ENCODE measurements at regions of chr11 and their contacts with region 1.

Region 1: DNA sequence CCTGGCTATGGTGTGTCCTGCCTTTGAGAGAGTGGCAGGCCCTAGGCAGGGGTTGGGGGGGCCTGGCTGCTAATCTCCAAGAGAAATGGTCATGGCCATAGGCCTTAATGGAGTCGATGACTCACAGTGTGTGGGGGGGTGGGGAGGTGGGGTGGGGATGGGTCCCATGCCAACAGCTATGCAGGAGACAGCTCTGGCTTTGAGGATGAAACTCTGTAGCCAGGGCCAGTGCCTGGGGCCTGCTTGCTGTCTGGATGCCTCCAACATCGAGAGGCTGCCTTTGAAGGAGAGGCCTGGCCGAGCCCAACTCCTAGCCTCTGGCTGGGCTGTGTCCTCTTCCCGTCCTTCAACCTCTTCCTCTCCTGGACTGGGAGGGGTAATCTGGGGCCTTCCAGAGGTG is 23.9 kb upstream of the TSPAN18 start:
- DNase-seq: no peak
- ATAC-seq: peak; percentile 28 to 43

Region 2: DNA sequence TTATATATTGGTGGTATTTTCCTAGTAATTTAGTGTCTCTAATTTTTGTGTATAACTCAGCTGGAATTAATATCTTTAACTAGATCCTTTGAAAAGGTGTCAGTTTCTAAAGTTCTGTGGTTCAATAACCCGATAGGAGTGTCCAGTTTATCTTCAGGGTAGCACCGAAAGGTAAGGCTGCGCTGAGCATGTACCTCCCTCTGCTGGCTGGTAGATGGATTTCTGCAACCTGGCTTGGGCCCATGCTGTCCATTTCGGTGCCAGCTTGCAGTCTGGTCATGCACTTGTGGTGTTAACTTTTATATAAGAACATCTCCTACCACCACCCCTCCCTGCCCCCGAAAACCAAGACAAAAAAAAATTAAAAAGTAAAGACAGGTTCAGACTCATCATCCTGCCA is 582.7 kb before region 1 on chr11:
- intact Hi-C with region 1: no loop called
- DNase-seq: no peak
- ATAC-seq: peak; percentile 71 to 75

Region 3: DNA sequence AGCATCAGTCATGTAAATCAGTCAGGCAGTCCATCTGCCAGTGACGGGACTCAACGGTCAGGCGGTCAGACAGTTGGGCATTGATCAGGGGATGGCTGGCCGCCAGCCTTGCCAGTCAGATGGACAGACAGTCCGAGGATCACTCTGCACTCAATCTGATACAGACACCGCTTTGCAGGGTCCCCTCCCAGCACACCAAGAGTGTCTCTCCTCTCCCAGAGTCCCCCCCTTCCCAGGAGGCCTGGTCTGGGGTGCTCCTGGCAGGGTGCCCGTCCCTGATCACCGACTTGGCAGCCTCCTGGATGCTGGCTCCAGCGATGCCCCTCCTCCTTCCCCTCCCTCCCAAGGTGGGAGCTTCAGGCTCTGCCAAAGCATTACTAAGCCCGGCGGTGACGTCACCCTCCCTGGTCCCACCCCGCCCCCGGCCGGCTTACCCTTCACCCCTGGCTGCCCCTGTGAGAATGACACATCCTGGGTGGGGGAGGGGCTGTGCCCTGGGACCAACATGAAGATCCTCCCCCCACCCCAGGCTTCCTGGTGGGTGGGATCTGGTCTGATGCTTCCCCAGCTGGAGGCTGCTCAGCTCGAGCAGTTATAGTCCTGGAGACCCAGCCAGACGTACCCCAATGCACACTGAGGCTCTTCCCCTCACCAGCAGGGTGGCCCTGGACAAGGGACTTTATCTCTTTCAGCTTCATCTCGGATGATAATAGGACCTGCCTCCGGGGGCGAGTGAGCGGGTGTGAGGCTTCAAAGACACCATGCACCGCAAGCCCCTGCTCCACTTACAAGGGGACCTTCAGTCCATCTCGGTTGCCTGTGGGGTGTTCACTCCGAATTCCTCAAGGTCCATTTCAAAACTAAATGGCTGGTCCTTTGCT is 68.2 kb before region 1 on chr11:
- intact Hi-C with region 1: loop called in 1 of 2 experiments (anchors 2 kb)
- DNase-seq: peak; percentile 92
- ATAC-seq: peak; percentile 82 to 96

Region 4: DNA sequence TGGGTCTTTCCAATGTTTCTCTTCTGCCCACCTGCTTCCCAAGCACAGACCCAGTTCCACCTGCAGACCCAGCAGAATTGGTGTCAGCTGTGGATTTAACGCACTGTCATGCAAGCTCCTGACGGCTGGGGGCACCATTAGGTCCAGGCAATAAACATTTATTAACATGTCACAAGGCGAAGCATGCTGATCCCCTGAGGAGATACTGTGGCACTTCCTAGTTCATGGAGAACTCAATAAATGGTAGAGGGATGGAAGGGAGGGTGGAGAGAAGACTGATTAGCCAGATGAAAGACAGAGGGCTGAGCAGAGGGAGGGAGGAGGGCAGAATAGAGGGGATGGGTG is 44.4 kb before region 1 on chr11:
- intact Hi-C with region 1: loop called in 1 of 2 experiments (anchors 5 kb)
- DNase-seq: no peak
- ATAC-seq: no peak

Region 5: GRCh38 chr11:44804449-44805437 is 101.9 kb after region 1 on chr11:
- intact Hi-C with region 1: no loop called
- DNase-seq: no peak
- ATAC-seq: peak in 1 of 2 donors; percentile 25